Right ventricle myocardium inferior (tissue), 1 donor: ENCODE measurements at regions of chr2 and their contacts with region 1.

Region 1: GRCh38 chr2:176088048-176088936 is 4.2 kb upstream of the HOXD13 start:
- DNase-seq: no peak
- ATAC-seq: peak; percentile 80

Region 2: GRCh38 chr2:175414882-175415487 is 673.3 kb before region 1 on chr2:
- intact Hi-C with region 1: loop called (anchors 5 kb)
- DNase-seq: peak; percentile 71
- ATAC-seq: peak; percentile 48

Region 3: GRCh38 chr2:175690113-175690837 is 398.0 kb before region 1 on chr2:
- intact Hi-C with region 1: loop called (anchors 2 kb)
- DNase-seq: no peak
- ATAC-seq: no peak

Region 4: DNA sequence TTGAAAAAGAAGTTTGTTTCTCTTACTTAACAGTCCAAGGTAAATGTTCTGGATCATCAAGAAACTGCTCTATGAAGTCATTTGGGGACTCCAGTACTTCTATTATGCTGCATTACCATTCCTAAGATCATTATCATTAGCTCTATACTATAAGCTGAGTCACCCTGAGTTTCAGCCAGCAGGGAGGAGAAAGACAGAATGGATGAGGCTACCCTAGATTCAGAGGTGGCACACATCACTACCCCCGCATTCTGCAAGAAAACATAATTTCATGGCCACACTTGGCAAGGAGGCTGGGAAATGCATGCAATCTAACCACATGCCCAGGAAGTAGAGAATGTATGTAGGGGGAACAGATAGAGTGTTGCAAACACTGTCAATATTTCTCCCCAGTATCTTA is 69.6 kb before region 1 on chr2:
- intact Hi-C with region 1: no loop called
- DNase-seq: no peak
- ATAC-seq: no peak

Region 5: DNA sequence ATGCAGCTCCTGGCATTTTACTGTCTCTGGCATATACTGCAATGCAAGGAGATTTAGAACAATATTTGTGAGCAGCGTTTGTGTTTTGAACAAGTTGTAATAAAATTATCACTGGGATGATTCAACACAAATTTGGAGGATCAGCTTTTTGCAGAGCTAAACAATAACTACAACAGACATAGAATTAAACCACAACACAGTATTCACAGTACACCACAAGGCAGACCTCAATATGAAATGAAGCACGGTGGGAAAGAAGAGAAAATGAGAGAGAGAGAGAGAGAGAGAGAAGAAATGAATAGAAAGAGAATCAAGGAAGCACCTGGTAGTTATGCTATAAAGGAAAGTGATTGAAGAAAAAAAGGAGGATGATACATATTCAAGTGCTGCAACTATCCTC is 139.6 kb after region 1 on chr2:
- intact Hi-C with region 1: no loop called
- DNase-seq: no peak
- ATAC-seq: no peak